AG04450 (cell line): ENCODE measurements at regions of chrX and their contacts with region 1.

Region 1: GRCh38 chrX:17242470-17242869 is 132.5 kb upstream of the NHS start:
- DNase-seq: peak; percentile 7
- H3K4me3 ChIP-seq: no peak overlapping the region
- H3K27ac ChIP-seq: no peak overlapping the region
- H3K27me3 ChIP-seq: no peaks in the 10 kb centered on the region
- CTCF ChIP-seq: peak; percentile 64

Region 2: GRCh38 chrX:16300831-16301230 is 941.6 kb before region 1 on chrX:
- CTCF ChIA-PET with region 1: no interaction called
- POLR2A ChIA-PET with region 1: no interaction called
- DNase-seq: no peak
- H3K4me3 ChIP-seq: no peak overlapping the region
- H3K27ac ChIP-seq: no peak overlapping the region
- H3K27me3 ChIP-seq: no peaks in the 10 kb centered on the region
- CTCF ChIP-seq: no peak

Region 3: DNA sequence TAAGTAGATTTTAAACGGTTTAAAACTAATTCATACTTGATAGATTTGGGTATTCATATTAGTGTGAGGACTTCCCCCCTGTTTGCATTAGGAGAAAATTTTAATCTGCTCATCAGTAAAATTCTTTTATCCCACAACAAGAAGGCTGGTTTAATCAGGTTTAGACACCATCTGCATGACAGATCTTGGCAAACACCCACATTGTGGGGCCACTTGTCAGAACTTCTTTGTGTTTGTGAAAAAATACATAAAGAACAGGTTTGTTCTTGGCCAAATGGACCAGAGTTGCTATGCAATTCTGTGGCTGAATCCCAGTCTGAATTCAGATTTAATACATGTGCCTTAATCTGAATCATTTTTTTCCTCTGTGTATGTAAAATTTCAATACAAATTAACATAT is 174.9 kb before region 1 on chrX:
- CTCF ChIA-PET with region 1: no interaction called
- POLR2A ChIA-PET with region 1: no interaction called
- DNase-seq: no peak
- H3K4me3 ChIP-seq: no peak overlapping the region
- H3K27ac ChIP-seq: no peak overlapping the region
- H3K27me3 ChIP-seq: no peaks in the 10 kb centered on the region
- CTCF ChIP-seq: no peak

Region 4: DNA sequence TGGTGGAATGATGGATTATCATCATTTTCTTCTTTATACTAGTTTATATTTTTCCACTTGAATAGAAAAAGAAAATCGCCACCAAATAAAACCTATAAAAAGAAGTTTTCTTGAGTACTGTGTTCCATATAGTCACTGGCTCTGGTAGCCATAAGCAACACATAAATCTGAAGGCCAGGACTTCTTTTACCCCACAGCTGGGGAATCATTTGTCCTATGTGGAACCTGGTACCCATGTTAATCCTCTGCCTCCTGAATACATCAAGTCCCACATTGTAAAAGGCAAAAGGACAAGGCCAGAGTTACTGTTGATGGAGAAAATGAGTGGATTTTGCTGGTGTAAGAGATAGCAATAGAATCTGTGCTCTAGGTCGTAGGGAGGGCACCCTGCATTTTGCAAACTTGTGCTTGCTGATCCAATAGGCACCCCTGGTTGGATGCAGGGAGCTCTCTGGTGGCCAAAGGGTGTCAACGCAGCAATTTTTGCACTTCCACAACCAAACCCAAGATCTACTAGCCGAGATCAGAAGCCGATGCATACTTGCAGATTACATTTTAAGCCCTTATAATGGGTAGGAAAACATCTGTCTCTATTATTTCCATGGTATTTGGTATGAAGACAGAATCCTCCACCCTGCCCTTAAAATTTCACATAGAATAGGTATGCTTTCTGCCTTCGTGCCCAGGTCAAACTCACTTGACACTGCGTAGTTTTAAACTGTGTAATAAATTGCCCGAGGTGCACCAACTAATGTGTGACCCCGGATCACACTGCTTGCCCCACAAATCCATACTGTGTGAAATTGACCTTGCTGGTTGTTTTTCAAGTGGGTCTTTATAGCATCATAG is 348.6 kb after region 1 on chrX:
- CTCF ChIA-PET with region 1: interaction called, 22 read pairs
- POLR2A ChIA-PET with region 1: no interaction called
- DNase-seq: no peak
- H3K4me3 ChIP-seq: peak overlapping the region; percentile 20; the same call in 1 of the 2 replicates
- H3K27ac ChIP-seq: peak overlapping the region; percentile 43
- H3K27me3 ChIP-seq: no peaks in the 10 kb centered on the region
- CTCF ChIP-seq: peak; percentile 76

Region 5: GRCh38 chrX:17689971-17690409 is 447.5 kb after region 1 on chrX:
- CTCF ChIA-PET with region 1: interaction called, 40 read pairs
- POLR2A ChIA-PET with region 1: no interaction called
- DNase-seq: peak; percentile 23
- H3K4me3 ChIP-seq: no peak overlapping the region
- H3K27ac ChIP-seq: no peak overlapping the region
- H3K27me3 ChIP-seq: no peaks in the 10 kb centered on the region
- CTCF ChIP-seq: peak; percentile 62